ENCODE measurements at regions of chr17 and their contacts with region 1.

Region 1: GRCh38 chr17:48492401-48493298 is 38.2 kb downstream of the HOXB1 start:
- DNase-seq: no peak
- ATAC-seq: peak; percentile 90
- H3K4me3 ChIP-seq: peak overlapping the region; percentile 26 to 60
- H3K27ac ChIP-seq: peak overlapping the region; percentile 90
- H3K4me1 ChIP-seq: peaks cover 38% of the 10 kb centered on the region
- H3K27me3 ChIP-seq: no peaks in the 10 kb centered on the region
- CTCF ChIP-seq: peak; percentile 97

Region 2: DNA sequence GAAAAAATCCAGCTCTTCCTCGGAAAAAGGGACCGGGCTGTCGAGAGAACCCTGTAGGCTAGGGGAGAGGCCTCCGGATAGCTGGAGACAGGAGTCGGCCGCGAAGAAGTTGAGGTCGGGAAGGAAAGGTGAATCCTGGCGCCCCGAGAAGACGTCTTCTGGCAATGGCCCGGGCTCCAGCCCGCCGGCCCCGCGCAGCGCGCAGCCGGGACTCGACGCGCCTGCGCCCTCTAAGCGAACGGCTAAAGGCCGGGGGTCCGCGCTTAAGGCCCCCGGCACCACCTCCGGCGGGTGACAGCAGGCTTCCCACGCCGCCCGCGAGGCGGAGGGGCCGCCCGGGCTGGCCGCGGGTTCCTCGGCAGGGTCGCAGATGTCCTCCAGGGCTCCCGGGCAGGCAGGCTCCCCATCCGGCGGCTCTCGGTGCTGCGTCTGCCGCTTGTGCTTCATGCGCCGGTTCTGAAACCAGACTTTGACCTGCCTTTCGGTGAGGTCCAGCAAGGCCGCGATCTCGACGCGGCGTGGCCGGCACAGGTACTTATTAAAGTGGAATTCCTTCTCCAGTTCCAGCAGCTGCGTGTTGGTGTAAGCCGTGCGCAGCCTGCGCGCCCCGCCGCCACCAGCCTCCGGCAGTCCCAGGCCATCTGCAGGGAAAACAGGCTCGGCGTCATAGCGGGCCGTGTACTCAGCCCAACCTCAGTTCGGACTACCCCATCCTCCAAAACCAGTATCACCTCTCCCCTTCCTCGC is 50.6 kb after region 1 on chr17:
- CTCF ChIA-PET with region 1: interaction called, 15 read pairs
- POLR2A ChIA-PET with region 1: interaction called, 4 read pairs
- in situ Hi-C with region 1: no loop called
- intact Hi-C with region 1: loop called (anchors 5 kb)
- DNase-seq: no peak
- ATAC-seq: peak; percentile 59
- H3K4me3 ChIP-seq: peak overlapping the region; percentile 69 to 81
- H3K27ac ChIP-seq: peak overlapping the region; percentile 98
- H3K4me1 ChIP-seq: peaks cover 48% of the 10 kb centered on the region
- H3K27me3 ChIP-seq: no peaks in the 10 kb centered on the region
- CTCF ChIP-seq: no peak

Region 3: DNA sequence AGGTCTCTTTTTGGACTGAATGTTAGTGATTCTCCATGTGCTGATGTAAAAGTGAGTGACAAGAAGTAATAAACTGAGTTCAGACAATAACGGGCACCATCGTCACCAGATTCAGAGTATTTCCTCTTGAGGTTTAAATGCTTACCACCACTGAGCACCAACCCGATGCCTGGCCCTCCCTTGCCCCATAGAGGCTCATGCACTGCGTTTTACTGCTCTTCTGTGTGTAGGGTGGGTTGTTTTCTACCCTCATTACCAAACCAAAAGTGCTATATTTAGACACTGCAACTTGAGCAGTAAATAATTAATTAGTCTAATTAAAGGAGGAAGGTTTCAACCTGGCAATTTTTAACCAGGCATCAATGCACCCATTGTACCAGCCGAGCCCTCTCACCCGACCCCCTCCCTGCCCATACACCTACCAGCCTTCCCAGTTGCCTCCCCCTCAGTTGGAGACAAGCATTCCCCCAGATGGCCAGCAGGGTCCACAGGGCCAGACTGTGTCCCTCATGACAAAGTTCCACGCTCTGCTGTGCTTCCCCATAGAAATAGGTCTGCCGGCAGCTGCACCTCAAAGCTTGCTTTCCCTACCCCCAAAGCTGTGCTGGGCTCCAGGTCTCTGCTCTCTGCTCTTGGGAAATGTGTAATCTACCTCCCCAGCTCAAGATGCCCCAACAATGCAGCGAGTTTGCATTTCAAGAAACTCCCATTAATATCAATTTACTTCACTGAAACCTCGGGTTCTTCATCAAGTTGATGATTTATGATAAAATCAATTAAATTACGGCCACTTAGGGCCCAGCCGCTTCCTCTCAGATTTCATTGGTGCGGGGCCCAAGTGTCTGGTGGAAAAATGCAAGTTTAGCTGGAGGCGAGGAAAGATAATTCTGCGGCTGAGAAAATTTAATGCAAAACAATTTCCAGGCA is 69.5 kb after region 1 on chr17:
- CTCF ChIA-PET with region 1: no interaction called
- POLR2A ChIA-PET with region 1: no interaction called
- in situ Hi-C with region 1: no loop called
- intact Hi-C with region 1: no loop called
- DNase-seq: no peak
- ATAC-seq: peak; percentile 40
- H3K4me3 ChIP-seq: peak overlapping the region; percentile 0 to 36; a peak in 1 of 4 replicates
- H3K27ac ChIP-seq: peak overlapping the region; percentile 97
- H3K4me1 ChIP-seq: peaks cover 95% of the 10 kb centered on the region
- H3K27me3 ChIP-seq: no peaks in the 10 kb centered on the region
- CTCF ChIP-seq: peak; percentile 66; the same call in 1 of the 2 replicates